ENCODE measurements at regions of chr16 and their contacts with region 1.

Region 1: GRCh38 chr16:53099318-53100130 is 44.7 kb downstream of the CHD9 start:
- DNase-seq: peak; percentile 98
- H3K4me3 ChIP-seq: peak overlapping the region; percentile 24 to 53 (median 36)
- H3K27ac ChIP-seq: peak overlapping the region; percentile 91
- H3K4me1 ChIP-seq: peaks cover 26% of the 10 kb centered on the region
- H3K27me3 ChIP-seq: no peaks in the 10 kb centered on the region
- CTCF ChIP-seq: peak in 1 of 2 donors; percentile 3

Region 2: GRCh38 chr16:53041320-53042051 is 58.0 kb before region 1 on chr16:
- CTCF ChIA-PET with region 1: no interaction called
- dilution Hi-C with region 1: no loop called
- in situ Hi-C with region 1: no loop called
- intact Hi-C with region 1: no loop called
- DNase-seq: peak; percentile 90
- H3K4me3 ChIP-seq: peak overlapping the region; percentile 7 to 35 (median 26)
- H3K27ac ChIP-seq: peak overlapping the region; percentile 50
- H3K4me1 ChIP-seq: peaks cover 45% of the 10 kb centered on the region
- H3K27me3 ChIP-seq: no peaks in the 10 kb centered on the region
- CTCF ChIP-seq: no peak

Region 3: GRCh38 chr16:53080345-53081031 is 19.0 kb before region 1 on chr16:
- CTCF ChIA-PET with region 1: no interaction called
- dilution Hi-C with region 1: no loop called
- in situ Hi-C with region 1: no loop called
- intact Hi-C with region 1: loop called (anchors 1 kb)
- DNase-seq: peak; percentile 91
- H3K4me3 ChIP-seq: peak overlapping the region in 2 of 3 experiments; percentile 3 to 13
- H3K27ac ChIP-seq: peak overlapping the region; percentile 64
- H3K4me1 ChIP-seq: peaks cover 63% of the 10 kb centered on the region
- H3K27me3 ChIP-seq: no peaks in the 10 kb centered on the region
- CTCF ChIP-seq: no peak

Region 4: GRCh38 chr16:53207810-53208752 is 108.6 kb after region 1 on chr16:
- CTCF ChIA-PET with region 1: no interaction called
- dilution Hi-C with region 1: no loop called
- in situ Hi-C with region 1: no loop called
- intact Hi-C with region 1: loop called (anchors 1 kb)
- DNase-seq: peak; percentile 82
- H3K4me3 ChIP-seq: peak overlapping the region; percentile 57 to 79 (median 63)
- H3K27ac ChIP-seq: peak overlapping the region; percentile 90
- H3K4me1 ChIP-seq: peaks cover 9% of the 10 kb centered on the region
- H3K27me3 ChIP-seq: no peaks in the 10 kb centered on the region
- CTCF ChIP-seq: peak; percentile 55 to 60

Region 5: DNA sequence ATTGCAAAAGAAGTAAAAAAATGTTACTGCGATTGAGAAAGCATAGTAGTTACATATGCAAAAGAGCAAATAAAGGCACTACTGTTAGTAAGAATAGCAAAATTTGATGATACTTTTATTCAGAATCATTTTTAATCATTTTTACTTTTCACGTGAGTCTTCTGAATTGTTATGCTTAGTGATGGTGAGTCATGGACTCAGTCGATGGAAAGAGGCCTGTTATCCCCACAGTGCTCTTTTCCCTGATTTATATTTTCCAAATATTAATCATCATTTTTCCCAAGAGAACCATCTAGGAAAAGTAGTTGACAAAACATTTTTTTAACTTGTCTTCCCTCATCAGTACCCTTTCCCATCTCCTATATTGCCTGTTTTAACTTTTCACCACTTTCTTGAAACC is 136.3 kb after region 1 on chr16:
- CTCF ChIA-PET with region 1: no interaction called
- dilution Hi-C with region 1: no loop called
- in situ Hi-C with region 1: no loop called
- intact Hi-C with region 1: no loop called
- DNase-seq: no peak
- H3K4me3 ChIP-seq: no peak overlapping the region
- H3K27ac ChIP-seq: no peak overlapping the region
- H3K4me1 ChIP-seq: no peaks in the 10 kb centered on the region
- H3K27me3 ChIP-seq: no peaks in the 10 kb centered on the region
- CTCF ChIP-seq: no peak

Measured in mammary epithelial cell (primary cell).